ENCODE measurements at regions of chr12 and their contacts with region 1.

Region 1: DNA sequence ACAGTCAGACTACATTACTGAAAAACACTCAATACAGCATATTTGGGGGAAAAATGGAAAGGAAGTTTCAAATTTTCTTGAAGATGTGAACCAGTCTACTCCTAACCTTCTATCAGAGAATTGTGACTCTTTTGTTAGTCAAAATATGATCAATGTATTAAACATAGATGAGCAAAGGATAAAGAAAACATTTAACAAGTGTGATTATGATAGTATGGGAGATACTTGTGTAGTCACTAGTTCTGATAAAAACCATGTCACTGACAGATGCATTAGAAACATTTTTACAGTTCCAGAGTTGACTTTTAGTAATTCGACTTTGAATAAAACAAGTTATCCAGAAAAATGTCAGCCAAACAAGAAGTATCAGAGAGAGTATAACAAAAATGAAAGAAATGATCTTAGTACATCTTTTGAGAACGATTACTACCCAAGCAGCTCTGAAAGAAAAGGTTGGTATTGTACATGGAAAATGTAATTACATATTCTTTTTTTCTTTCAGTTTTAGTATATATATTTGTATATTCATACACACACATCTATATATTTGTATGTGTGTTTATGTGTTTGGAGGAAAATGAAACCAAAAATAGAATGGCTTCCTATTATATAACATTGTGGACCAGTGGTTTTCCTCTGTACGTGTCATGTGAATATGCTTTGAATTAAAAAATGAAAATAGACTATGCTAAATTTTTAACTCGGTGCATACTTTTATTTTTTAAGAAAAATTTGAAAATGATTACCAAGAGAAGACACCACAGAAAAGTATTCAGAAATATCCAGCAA is 63.3 kb upstream of the ABCD2 start:
- DNase-seq: peak in 6 of 9 donors; percentile 27 to 60 (median 44)
- ATAC-seq: peak; percentile 75
- H3K4me3 ChIP-seq: peak overlapping the region; percentile 30
- H3K4me3 Mint-ChIP-seq: peak overlapping the region; percentile 61 to 90 (median 83)
- H3K27ac ChIP-seq: peak overlapping the region; percentile 64
- H3K27ac Mint-ChIP-seq: peak overlapping the region; percentile 87 to 99 (median 96)
- H3K4me1 ChIP-seq: peaks cover 24 to 26% of the 10 kb centered on the region in 2 donors
- H3K4me1 Mint-ChIP-seq: peaks cover 16 to 45% (median 38%) of the 10 kb centered on the region in 7 donors
- H3K27me3 ChIP-seq: no peaks in the 10 kb centered on the region
- H3K27me3 Mint-ChIP-seq: no peaks in the 10 kb centered on the region

Region 2: DNA sequence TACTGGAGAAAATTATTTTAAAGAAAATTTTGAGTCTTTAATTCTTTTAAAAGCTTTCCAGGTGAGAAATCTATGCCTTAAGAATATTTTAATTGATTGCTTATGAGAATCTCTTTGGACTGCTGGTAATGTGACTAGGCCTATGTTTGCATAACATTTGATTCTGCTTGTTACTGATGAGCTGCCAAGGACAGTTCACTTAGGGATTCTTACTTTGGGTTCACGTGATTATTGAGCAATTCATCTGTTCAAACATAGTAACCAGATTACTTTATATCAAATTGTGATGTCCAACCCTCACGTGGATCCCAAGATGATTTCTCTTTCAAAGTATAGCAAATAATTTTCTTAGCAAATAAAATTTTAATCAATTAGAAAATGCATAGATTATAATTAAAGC is 35.9 kb before region 1 on chr12:
- CTCF ChIA-PET with region 1: no interaction called
- POLR2A ChIA-PET with region 1: no interaction called
- intact Hi-C with region 1: loop called in 1 of 2 experiments (anchors 5 kb)
- DNase-seq: no peak
- ATAC-seq: no peak
- H3K4me3 ChIP-seq: no peak overlapping the region
- H3K4me3 Mint-ChIP-seq: no peak overlapping the region
- H3K27ac ChIP-seq: no peak overlapping the region
- H3K27ac Mint-ChIP-seq: no peak overlapping the region
- H3K4me1 ChIP-seq: no peaks in the 10 kb centered on the region
- H3K4me1 Mint-ChIP-seq: peaks cover 0 to 24% (median 14%) of the 10 kb centered on the region in 7 donors
- H3K27me3 ChIP-seq: no peaks in the 10 kb centered on the region
- H3K27me3 Mint-ChIP-seq: peaks cover 0 to 2% (median 0%) of the 10 kb centered on the region in 5 donors

Region 3: DNA sequence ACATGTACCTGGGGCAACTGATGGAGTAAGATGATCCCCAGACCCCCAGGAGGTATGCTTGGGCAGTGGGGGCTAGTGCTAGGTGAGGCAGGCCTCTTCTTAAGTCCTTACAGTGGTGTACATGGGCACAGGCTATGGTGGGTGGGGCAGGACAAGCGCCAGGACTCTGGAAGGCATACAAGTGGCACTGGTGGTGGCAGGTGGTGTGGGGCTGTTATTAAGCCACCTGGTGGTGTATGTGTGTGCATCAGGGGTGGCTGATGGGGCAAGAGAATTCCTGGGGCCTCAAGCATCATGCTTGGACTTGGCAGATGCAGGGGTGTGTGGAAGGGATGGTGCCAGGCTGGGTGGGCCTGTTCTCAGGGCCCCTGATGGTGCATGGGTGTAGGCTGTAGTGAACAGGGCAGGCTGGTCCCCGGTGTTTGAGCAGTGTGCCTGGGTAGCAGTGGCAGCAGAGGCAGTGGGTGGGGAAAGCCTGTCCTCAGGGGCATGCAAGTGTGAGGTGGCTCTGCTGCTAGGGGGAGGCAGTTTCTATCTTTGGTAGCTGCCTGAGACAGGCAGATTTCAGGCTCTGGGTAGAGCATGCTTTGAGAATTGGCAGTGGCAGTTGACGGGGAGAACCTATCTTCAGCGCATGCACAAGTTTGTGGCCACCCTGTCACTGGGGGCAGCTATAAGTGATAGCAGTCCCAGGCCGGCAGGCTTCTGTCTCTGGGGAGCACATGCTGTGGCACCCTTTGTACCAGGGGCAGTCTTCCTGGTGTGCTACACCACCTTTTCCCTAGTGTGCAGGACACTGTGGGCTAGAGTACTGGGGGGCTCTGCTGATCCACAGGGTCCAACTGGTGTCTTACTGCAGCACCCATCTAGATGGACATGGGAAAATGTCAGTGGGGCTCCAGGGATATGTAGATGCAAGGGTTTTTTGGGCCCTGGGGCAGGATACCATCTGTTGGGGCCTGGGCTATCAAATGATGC is 10.7 kb before region 1 on chr12:
- CTCF ChIA-PET with region 1: interaction called, 3 read pairs
- POLR2A ChIA-PET with region 1: interaction called, 16 read pairs
- intact Hi-C with region 1: loop called in 1 of 2 experiments (anchors 1 kb)
- DNase-seq: no peak
- ATAC-seq: no peak
- H3K4me3 ChIP-seq: no peak overlapping the region
- H3K4me3 Mint-ChIP-seq: peak overlapping the region in 1 of 10 donors; percentile 42
- H3K27ac ChIP-seq: no peak overlapping the region
- H3K27ac Mint-ChIP-seq: peak overlapping the region in 4 of 9 donors; percentile 32 to 85 (median 55)
- H3K4me1 ChIP-seq: peaks cover 13 to 16% of the 10 kb centered on the region in 2 donors
- H3K4me1 Mint-ChIP-seq: peaks cover 25 to 77% (median 50%) of the 10 kb centered on the region in 7 donors
- H3K27me3 ChIP-seq: no peaks in the 10 kb centered on the region
- H3K27me3 Mint-ChIP-seq: no peaks in the 10 kb centered on the region